Esophagus muscularis mucosa (tissue), 4 donors: ENCODE measurements at regions of chr4 and their contacts with region 1.

Region 1: DNA sequence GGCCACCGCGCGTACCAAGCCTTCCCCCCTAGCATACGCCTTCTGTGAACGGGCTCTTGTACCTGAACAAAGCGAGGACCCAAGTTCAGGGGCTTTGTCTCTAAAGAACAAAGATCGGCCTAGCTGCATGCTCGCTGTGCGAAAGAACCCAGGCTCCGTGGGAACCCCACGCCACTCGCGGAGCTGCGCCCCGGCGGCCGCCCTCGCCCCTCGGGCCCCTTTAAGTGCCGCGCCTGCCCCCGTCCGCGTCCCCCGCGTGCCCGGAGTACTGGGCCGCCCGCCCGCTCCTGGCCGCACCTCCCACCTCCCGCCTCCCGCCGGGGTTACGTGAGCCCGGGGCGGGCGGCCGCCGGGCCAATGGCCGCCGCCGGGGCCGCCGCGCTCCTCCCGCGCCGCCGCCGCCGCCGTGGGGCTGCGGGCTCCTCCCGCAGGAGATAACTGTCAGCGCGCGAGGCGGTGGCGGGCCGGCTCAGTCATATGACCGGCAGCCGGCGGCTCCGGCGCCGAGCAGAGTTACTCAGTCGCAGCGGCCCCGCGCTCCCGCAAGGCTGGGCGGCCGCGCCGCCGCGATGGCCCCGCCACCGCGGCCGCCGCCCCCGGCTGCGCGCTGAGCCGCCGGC is at the start of gene FNIP2:
- DNase-seq: peak; percentile 93
- H3K4me3 ChIP-seq: peak within 1 kb of the TSS; percentile 65 to 96 (median 87)
- H3K27ac ChIP-seq: peak within 1 kb of the TSS; percentile 88 to 94 (median 92)
- H3K4me1 ChIP-seq: peaks cover 21 to 60% (median 58%) of the 10 kb centered on the region in 4 donors
- H3K27me3 ChIP-seq: no peaks in the 10 kb centered on the region
- CTCF ChIP-seq: no peak
- EP300 ChIP-seq: no peak
- POLR2A ChIP-seq: no peak
- total RNA-seq, gene FNIP2: 80.0 to 97.7 (median 87.4) TPM

Region 2: GRCh38 chr4:158671915-158672806 is 96.5 kb before region 1 on chr4 and contains the start of gene ETFDH:
- intact Hi-C with region 1: loop called (anchors 5 kb)
- DNase-seq: peak; percentile 100
- H3K4me3 ChIP-seq: peak within 1 kb of the TSS; percentile 79 to 88 (median 80)
- H3K27ac ChIP-seq: peak within 1 kb of the TSS; percentile 93 to 97 (median 95)
- H3K4me1 ChIP-seq: peaks cover 11 to 33% (median 30%) of the 10 kb centered on the region in 4 donors
- H3K27me3 ChIP-seq: no peaks in the 10 kb centered on the region
- CTCF ChIP-seq: peak; percentile 58 to 65 (median 63)
- EP300 ChIP-seq: peak; percentile 24
- POLR2A ChIP-seq: peak; percentile 33
- total RNA-seq, gene ETFDH: 33.4 to 40.1 (median 35.6) TPM

Region 3: GRCh38 chr4:158722917-158723793 is 45.5 kb before region 1 on chr4 and contains the start of gene PPID:
- intact Hi-C with region 1: loop called (anchors 5 kb)
- DNase-seq: peak; percentile 95
- H3K4me3 ChIP-seq: peak within 1 kb of the TSS; percentile 79 to 91 (median 88)
- H3K27ac ChIP-seq: peak within 1 kb of the TSS; percentile 88 to 95 (median 91)
- H3K4me1 ChIP-seq: peaks cover 14 to 24% (median 20%) of the 10 kb centered on the region in 4 donors
- H3K27me3 ChIP-seq: no peaks in the 10 kb centered on the region
- CTCF ChIP-seq: no peak
- EP300 ChIP-seq: no peak
- POLR2A ChIP-seq: peak; percentile 36
- total RNA-seq, gene PPID: 17.1 to 29.0 (median 25.8) TPM

Region 4: GRCh38 chr4:158809611-158810486 is 41.2 kb after region 1 on chr4:
- intact Hi-C with region 1: loop called (anchors 2 kb)
- DNase-seq: no peak
- H3K4me3 ChIP-seq: peak overlapping the region in 3 of 4 donors; percentile 5 to 18 (median 9)
- H3K27ac ChIP-seq: peak overlapping the region; percentile 76 to 84 (median 82)
- H3K4me1 ChIP-seq: peaks cover 68 to 93% (median 90%) of the 10 kb centered on the region in 4 donors
- H3K27me3 ChIP-seq: no peaks in the 10 kb centered on the region
- CTCF ChIP-seq: no peak
- EP300 ChIP-seq: no peak
- POLR2A ChIP-seq: no peak

Region 5: GRCh38 chr4:158821228-158821971 is 52.7 kb after region 1 on chr4:
- intact Hi-C with region 1: loop called (anchors 5 kb)
- DNase-seq: no peak
- H3K4me3 ChIP-seq: no peak overlapping the region
- H3K27ac ChIP-seq: peak overlapping the region in 2 of 4 donors; percentile 5 to 17
- H3K4me1 ChIP-seq: peaks cover 66 to 89% (median 83%) of the 10 kb centered on the region in 4 donors
- H3K27me3 ChIP-seq: no peaks in the 10 kb centered on the region
- CTCF ChIP-seq: no peak
- EP300 ChIP-seq: no peak
- POLR2A ChIP-seq: no peak